Activated CD4-positive, alpha-beta T cell treated with anti-CD3 and anti-CD28 coated beads for 36 hours (primary cell): ENCODE measurements at regions of chr7 and their contacts with region 1.

Region 1: GRCh38 chr7:17854261-17855047 is 85.8 kb downstream of the SNX13 start:
- DNase-seq: no peak
- ATAC-seq: peak; percentile 78
- H3K4me3 Mint-ChIP-seq: no peak overlapping the region
- H3K27ac Mint-ChIP-seq: no peak overlapping the region
- H3K4me1 Mint-ChIP-seq: peaks cover 26% of the 10 kb centered on the region
- H3K27me3 Mint-ChIP-seq: no peaks in the 10 kb centered on the region

Region 2: DNA sequence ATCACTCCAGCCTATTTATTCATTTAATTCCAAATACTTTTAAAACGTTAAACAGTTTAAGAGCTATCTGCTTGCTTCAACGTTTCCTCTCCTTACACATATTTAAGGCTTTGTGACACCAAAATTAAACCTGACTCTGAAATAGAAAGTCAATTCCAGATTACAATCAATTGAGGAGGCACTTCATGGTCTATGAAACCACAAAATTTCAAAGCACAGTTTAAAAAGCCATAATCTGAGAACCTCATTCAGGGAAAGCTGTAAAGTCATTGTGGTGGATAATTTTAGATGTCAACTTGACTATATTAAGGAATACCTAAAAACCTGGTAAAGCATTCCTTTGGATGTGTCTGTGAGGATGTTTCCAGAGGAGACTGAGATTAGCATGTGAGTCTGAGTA is 79.6 kb after region 1 on chr7:
- CTCF ChIA-PET with region 1: no interaction called
- POLR2A ChIA-PET with region 1: no interaction called
- intact Hi-C with region 1: loop called in 1 of 2 experiments (anchors 5 kb)
- DNase-seq: no peak
- ATAC-seq: no peak
- H3K4me3 Mint-ChIP-seq: no peak overlapping the region
- H3K27ac Mint-ChIP-seq: peak overlapping the region; percentile 39
- H3K4me1 Mint-ChIP-seq: peaks cover 82% of the 10 kb centered on the region
- H3K27me3 Mint-ChIP-seq: no peaks in the 10 kb centered on the region

Region 3: DNA sequence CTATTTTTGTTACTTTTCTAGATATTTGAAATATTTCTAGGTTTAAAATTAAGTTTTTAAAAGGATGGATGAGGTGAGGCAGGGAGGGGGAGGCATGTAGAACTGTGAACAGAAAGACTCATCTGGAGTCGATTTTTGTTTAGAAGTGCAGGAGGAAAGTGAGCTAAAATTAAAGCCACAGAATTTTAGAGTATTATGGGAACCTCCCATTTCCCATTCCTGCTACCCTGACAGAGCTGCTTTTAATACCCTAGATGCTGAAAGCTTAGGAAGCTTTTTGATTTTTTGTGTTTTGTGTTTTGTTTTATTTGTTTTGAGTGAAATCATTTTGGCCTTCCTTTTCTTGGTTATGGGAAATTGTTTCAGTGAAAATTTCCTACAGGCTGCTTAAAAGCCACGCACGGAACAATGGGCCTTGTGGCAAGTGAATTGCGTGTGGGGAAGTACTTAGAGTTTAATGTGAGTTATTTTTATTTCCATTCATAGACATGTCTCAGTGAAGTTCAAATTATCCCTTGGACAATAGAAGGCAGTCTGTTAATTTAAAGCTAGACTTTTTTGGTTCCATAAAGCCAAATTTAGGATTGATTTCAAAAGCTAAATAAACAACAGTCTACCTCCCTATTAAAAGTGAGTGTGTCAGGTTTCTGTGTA is 539.1 kb after region 1 on chr7:
- CTCF ChIA-PET with region 1: no interaction called
- POLR2A ChIA-PET with region 1: no interaction called
- intact Hi-C with region 1: no loop called
- DNase-seq: no peak
- ATAC-seq: no peak
- H3K4me3 Mint-ChIP-seq: no peak overlapping the region
- H3K27ac Mint-ChIP-seq: no peak overlapping the region
- H3K4me1 Mint-ChIP-seq: no peaks in the 10 kb centered on the region
- H3K27me3 Mint-ChIP-seq: no peaks in the 10 kb centered on the region